GM10248 (cell line): ENCODE measurements at regions of chr1 and their contacts with region 1.

Region 1: DNA sequence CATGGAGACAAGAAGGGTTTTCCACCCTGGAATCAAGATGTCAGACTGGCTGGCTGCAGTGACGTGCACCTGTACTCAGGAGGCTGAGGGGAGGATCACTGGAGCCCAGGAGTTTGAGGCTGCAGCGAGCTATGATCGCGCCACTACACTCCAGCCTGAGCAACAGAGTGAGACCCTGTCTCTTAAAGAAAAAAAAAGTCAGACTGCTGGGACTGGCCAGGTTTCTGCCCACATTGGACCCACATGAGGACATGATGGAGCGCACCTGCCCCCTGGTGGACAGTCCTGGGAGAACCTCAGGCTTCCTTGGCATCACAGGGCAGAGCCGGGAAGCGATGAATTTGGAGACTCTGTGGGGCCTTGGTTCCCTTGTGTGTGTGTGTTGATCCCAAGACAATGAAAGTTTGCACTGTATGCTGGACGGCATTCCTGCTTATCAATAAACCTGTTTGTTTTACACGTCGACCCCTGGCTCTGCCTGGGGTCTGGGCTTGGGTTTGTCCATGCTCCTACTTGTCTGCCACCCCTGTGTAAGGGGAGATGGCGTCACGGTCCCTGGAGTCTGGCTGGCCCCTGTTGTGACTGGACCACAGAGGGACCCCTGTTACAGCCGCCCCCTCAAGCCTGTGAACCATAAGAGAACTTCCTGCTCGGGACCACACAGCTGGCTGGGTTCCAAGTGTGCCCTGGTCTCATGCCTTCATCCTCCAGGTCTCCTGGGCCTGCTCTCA is 20.9 kb upstream of the VPS13D start:
- DNase-seq: peak; percentile 85
- CTCF ChIP-seq: peak; percentile 88

Region 2: DNA sequence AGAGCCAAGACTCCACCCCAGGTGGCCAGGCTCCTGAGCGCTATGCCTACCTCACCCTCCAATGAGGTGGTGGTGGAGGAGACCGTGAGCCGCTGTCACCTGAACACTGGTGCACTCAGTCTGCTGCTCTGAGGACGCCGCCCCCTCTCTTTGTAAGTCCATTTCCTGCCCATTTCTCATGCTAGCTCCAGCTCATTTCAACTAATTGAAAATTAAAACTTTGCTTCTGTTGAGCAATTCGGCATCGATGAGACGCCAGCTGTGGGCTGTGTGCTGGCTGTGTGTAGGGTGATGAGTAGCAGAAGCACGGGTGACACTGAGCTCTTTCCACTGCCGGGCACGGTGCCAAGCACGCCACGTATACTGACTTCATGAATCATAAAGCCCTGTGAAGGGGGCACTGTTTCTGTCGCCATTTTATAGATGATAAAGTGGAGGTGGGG is 30.9 kb before region 1 on chr1:
- CTCF ChIA-PET with region 1: interaction called, 5 read pairs
- POLR2A ChIA-PET with region 1: interaction called, 11 read pairs
- DNase-seq: no peak
- CTCF ChIP-seq: no peak

Region 3: GRCh38 chr1:12397462-12398450 is 188.8 kb after region 1 on chr1:
- CTCF ChIA-PET with region 1: no interaction called
- POLR2A ChIA-PET with region 1: no interaction called
- DNase-seq: no peak
- CTCF ChIP-seq: no peak